ENCODE measurements at regions of chr14 and their contacts with region 1.

Region 1: DNA sequence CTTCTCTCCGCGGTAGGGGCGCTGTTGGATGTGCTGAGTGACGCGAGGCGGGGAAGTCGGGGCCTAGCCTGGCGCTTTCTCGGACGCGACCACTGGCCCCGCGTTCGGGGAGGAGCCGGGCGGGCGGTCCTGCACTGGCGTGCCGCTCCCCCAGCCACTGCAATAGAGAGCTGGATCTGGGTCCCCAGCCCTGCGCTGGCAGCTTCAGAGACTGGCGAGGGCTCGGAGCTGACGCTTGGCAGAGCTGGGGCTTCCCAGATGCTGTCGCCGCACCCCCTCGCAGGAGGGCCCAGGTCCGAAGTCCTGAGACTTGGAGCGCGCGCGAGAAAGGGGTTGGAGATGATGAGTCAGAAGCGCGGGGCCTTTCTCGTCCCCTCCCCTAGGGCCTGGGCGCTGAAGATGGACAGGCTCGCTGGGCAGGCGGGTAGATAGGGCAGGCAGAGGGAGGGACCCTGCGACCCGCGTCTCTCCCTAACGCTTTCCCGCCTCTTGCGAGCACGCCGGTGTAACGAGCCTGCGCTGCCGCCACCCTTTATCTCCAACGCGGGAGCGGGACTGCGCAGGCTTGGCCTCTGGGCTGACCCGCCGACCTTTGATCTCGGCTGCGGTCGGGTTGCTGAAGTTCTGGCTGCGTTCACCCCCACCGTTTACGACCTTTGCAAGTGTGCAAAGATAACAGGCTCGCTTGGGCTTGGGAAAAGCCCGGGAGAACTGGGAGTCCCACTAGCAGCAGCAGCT is 3.0 kb downstream of the TMEM253 start:
- DNase-seq: peak; percentile 97
- ATAC-seq: peak; percentile 89
- H3K4me3 Mint-ChIP-seq: peak overlapping the region; percentile 93
- H3K27ac Mint-ChIP-seq: peak overlapping the region; percentile 91
- H3K4me1 Mint-ChIP-seq: peaks cover 43% of the 10 kb centered on the region
- H3K27me3 Mint-ChIP-seq: peaks cover 14% of the 10 kb centered on the region

Region 2: GRCh38 chr14:21003788-21004346 is 100.0 kb before region 1 on chr14:
- CTCF ChIA-PET with region 1: interaction called, 193 read pairs
- POLR2A ChIA-PET with region 1: no interaction called
- DNase-seq: no peak
- ATAC-seq: no peak
- H3K4me3 Mint-ChIP-seq: no peak overlapping the region
- H3K27ac Mint-ChIP-seq: no peak overlapping the region
- H3K4me1 Mint-ChIP-seq: no peaks in the 10 kb centered on the region
- H3K27me3 Mint-ChIP-seq: no peaks in the 10 kb centered on the region

Region 3: DNA sequence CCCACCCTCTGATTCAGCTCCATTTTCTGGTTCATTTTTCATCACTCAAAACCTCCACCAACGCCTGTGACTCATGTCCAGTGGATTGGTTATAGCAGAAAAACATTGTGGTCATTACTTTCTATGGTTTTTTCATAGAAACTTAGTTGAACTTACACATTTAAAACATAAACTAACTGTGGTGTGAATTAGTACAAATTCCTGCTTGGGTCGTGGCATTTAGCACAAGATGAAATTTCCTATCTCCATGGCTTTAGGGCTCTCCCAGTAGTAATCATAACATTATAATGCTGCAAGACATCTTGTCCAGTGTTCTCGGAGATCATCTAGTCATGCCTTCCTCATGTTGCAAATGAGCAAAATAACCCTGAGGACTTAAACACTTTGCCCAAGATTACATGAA is 54.6 kb before region 1 on chr14:
- CTCF ChIA-PET with region 1: interaction called, 17 read pairs
- POLR2A ChIA-PET with region 1: interaction called, 5 read pairs
- DNase-seq: no peak
- ATAC-seq: no peak
- H3K4me3 Mint-ChIP-seq: no peak overlapping the region
- H3K27ac Mint-ChIP-seq: no peak overlapping the region
- H3K4me1 Mint-ChIP-seq: peaks cover 4% of the 10 kb centered on the region
- H3K27me3 Mint-ChIP-seq: peaks cover 39% of the 10 kb centered on the region

Region 4: GRCh38 chr14:21092273-21093011 is 11.4 kb before region 1 on chr14:
- CTCF ChIA-PET with region 1: interaction called, 225 read pairs
- POLR2A ChIA-PET with region 1: interaction called, 11 read pairs
- DNase-seq: peak; percentile 92
- ATAC-seq: peak; percentile 70
- H3K4me3 Mint-ChIP-seq: no peak overlapping the region
- H3K27ac Mint-ChIP-seq: no peak overlapping the region
- H3K4me1 Mint-ChIP-seq: peaks cover 25% of the 10 kb centered on the region
- H3K27me3 Mint-ChIP-seq: peaks cover 27% of the 10 kb centered on the region

Measured in activated CD8-positive, alpha-beta T cell treated with anti-CD3 and anti-CD28 coated beads, Interleukin-2, amount 10 ng/mL, durations not matched to agents 7 days and 5 days (primary cell).